ENCODE measurements at regions of chr6 and their contacts with region 1.

Region 1: DNA sequence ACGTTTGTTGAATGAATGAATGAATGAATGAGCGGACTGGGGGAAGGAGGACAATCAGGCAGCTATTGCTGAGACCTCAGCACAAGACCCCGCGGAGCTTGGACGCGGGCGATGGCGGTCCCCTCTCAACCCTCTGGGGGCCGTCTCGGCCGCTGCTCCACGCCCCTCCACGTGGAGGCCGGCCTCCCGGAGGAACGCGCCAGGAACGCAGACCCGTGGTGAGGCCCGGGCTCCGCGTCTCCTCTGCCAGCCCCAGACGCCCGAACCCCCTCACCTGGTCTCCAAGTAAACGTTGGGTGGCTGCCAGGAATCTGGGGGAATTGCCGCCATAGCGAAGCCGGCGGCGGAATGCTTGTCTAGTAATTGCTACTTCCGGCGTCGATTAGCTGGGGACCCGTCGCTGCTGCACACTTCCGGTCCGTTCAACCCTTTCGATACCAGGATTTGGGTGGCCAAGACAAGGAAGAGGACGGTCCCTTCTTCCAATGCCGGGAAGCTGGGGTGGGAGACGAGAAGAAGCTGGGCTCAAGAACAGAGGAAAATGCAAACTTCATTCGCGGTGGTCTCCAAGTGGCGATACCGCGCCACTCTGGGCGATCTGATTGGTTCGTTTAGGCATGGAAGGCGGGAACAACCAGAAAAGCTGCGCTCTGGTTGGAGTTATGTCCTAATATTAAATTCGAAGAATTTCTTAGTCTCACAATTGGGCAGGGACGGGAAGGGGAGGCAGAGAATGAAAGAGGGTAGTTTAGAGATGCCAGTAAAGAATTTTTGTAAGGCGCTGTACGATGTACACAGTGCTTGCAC is at the start of gene PPIL1:
- DNase-seq: peak; percentile 72 to 92 (median 85)
- ATAC-seq: peak; percentile 90
- H3K4me3 ChIP-seq: peak within 1 kb of the TSS; percentile 88 to 92
- H3K4me3 Mint-ChIP-seq: peak within 1 kb of the TSS; percentile 100
- H3K27ac ChIP-seq: peak within 1 kb of the TSS; percentile 82 to 87
- H3K27ac Mint-ChIP-seq: peak within 1 kb of the TSS; percentile 100
- H3K4me1 ChIP-seq: peaks cover 16% of the 10 kb centered on the region
- H3K4me1 Mint-ChIP-seq: peaks cover 48% of the 10 kb centered on the region
- H3K27me3 ChIP-seq: peaks cover 0 to 6% of the 10 kb centered on the region in 2 experiments
- H3K27me3 Mint-ChIP-seq: peaks cover 16% of the 10 kb centered on the region
- CTCF ChIP-seq: no peak
- total RNA-seq, gene PPIL1: 2.4 TPM

Region 2: GRCh38 chr6:36615018-36615761 is 259.5 kb before region 1 on chr6:
- CTCF ChIA-PET with region 1: interaction called, 3 read pairs
- POLR2A ChIA-PET with region 1: no interaction called
- intact Hi-C with region 1: loop called in 1 of 2 experiments (anchors 10 kb)
- DNase-seq: peak in 5 of 9 experiments; percentile 31 to 80 (median 54)
- ATAC-seq: peak; percentile 84
- H3K4me3 ChIP-seq: no peak overlapping the region
- H3K4me3 Mint-ChIP-seq: no peak overlapping the region
- H3K27ac ChIP-seq: no peak overlapping the region
- H3K27ac Mint-ChIP-seq: peak overlapping the region; percentile 79
- H3K4me1 ChIP-seq: no peaks in the 10 kb centered on the region
- H3K4me1 Mint-ChIP-seq: peaks cover 15% of the 10 kb centered on the region
- H3K27me3 ChIP-seq: no peaks in the 10 kb centered on the region
- H3K27me3 Mint-ChIP-seq: no peaks in the 10 kb centered on the region
- CTCF ChIP-seq: peak; percentile 60

Region 3: GRCh38 chr6:36851149-36851614 is 23.5 kb before region 1 on chr6:
- CTCF ChIA-PET with region 1: interaction called, 4 read pairs
- POLR2A ChIA-PET with region 1: interaction called, 3 read pairs
- intact Hi-C with region 1: loop called in 1 of 2 experiments (anchors 1 kb)
- DNase-seq: peak in 4 of 9 experiments; percentile 26 to 61 (median 40)
- ATAC-seq: no peak
- H3K4me3 ChIP-seq: no peak overlapping the region
- H3K4me3 Mint-ChIP-seq: no peak overlapping the region
- H3K27ac ChIP-seq: no peak overlapping the region
- H3K27ac Mint-ChIP-seq: no peak overlapping the region
- H3K4me1 ChIP-seq: no peaks in the 10 kb centered on the region
- H3K4me1 Mint-ChIP-seq: peaks cover 2% of the 10 kb centered on the region
- H3K27me3 ChIP-seq: no peaks in the 10 kb centered on the region
- H3K27me3 Mint-ChIP-seq: no peaks in the 10 kb centered on the region
- CTCF ChIP-seq: peak; percentile 67

Region 4: GRCh38 chr6:36968266-36968977 is 93.8 kb after region 1 on chr6:
- CTCF ChIA-PET with region 1: no interaction called
- POLR2A ChIA-PET with region 1: no interaction called
- intact Hi-C with region 1: no loop called
- DNase-seq: no peak
- ATAC-seq: no peak
- H3K4me3 ChIP-seq: no peak overlapping the region
- H3K4me3 Mint-ChIP-seq: no peak overlapping the region
- H3K27ac ChIP-seq: no peak overlapping the region
- H3K27ac Mint-ChIP-seq: no peak overlapping the region
- H3K4me1 ChIP-seq: peaks cover 18% of the 10 kb centered on the region
- H3K4me1 Mint-ChIP-seq: peaks cover 17% of the 10 kb centered on the region
- H3K27me3 ChIP-seq: no peaks in the 10 kb centered on the region
- H3K27me3 Mint-ChIP-seq: no peaks in the 10 kb centered on the region
- CTCF ChIP-seq: no peak

Region 5: GRCh38 chr6:36985808-36986703 is 111.4 kb after region 1 on chr6 and contains the start of gene MTCH1:
- CTCF ChIA-PET with region 1: no interaction called
- POLR2A ChIA-PET with region 1: interaction called, 13 read pairs
- intact Hi-C with region 1: loop called (anchors 1 to 5 kb)
- DNase-seq: peak; percentile 74 to 95 (median 87)
- ATAC-seq: peak; percentile 82
- H3K4me3 ChIP-seq: peak within 1 kb of the TSS; percentile 97
- H3K4me3 Mint-ChIP-seq: no peak within 1 kb of the TSS
- H3K27ac ChIP-seq: peak within 1 kb of the TSS; percentile 83 to 85
- H3K27ac Mint-ChIP-seq: peak within 1 kb of the TSS; percentile 98
- H3K4me1 ChIP-seq: peaks cover 41% of the 10 kb centered on the region
- H3K4me1 Mint-ChIP-seq: peaks cover 20% of the 10 kb centered on the region
- H3K27me3 ChIP-seq: no peaks in the 10 kb centered on the region
- H3K27me3 Mint-ChIP-seq: no peaks in the 10 kb centered on the region
- CTCF ChIP-seq: no peak
- total RNA-seq, gene MTCH1: 267 to 269 TPM

Region 6: GRCh38 chr6:38702558-38703397 is 1828.1 kb after region 1 on chr6 and contains the start of gene GLO1:
- CTCF ChIA-PET with region 1: no interaction called
- POLR2A ChIA-PET with region 1: no interaction called
- intact Hi-C with region 1: loop called in 1 of 2 experiments (anchors 10 kb)
- DNase-seq: peak; percentile 91 to 98 (median 96)
- ATAC-seq: peak; percentile 99
- H3K4me3 ChIP-seq: peak within 1 kb of the TSS; percentile 64 to 88
- H3K4me3 Mint-ChIP-seq: peak within 1 kb of the TSS; percentile 83
- H3K27ac ChIP-seq: peak within 1 kb of the TSS; percentile 78 to 90
- H3K27ac Mint-ChIP-seq: peak within 1 kb of the TSS; percentile 92
- H3K4me1 ChIP-seq: no peaks in the 10 kb centered on the region
- H3K4me1 Mint-ChIP-seq: peaks cover 24% of the 10 kb centered on the region
- H3K27me3 ChIP-seq: no peaks in the 10 kb centered on the region
- H3K27me3 Mint-ChIP-seq: peaks cover 6% of the 10 kb centered on the region
- CTCF ChIP-seq: no peak
- total RNA-seq, gene GLO1: 23.1 to 23.9 TPM